Activated CD4-positive, alpha-beta T cell treated with anti-CD3 and anti-CD28 coated beads for 36 hours (primary cell): ENCODE measurements at regions of chr6 and their contacts with region 1.

Region 1: GRCh38 chr6:152863618-152864326 is 113.2 kb downstream of the VIP start:
- DNase-seq: peak; percentile 80
- ATAC-seq: peak; percentile 72
- H3K4me3 Mint-ChIP-seq: no peak overlapping the region
- H3K27ac Mint-ChIP-seq: no peak overlapping the region
- H3K4me1 Mint-ChIP-seq: no peaks in the 10 kb centered on the region
- H3K27me3 Mint-ChIP-seq: peaks cover 7% of the 10 kb centered on the region

Region 2: GRCh38 chr6:153312641-153313040 is 448.9 kb after region 1 on chr6:
- CTCF ChIA-PET with region 1: no interaction called
- POLR2A ChIA-PET with region 1: no interaction called
- intact Hi-C with region 1: loop called in 1 of 2 experiments (anchors 5 kb)
- DNase-seq: peak; percentile 65
- ATAC-seq: peak; percentile 51
- H3K4me3 Mint-ChIP-seq: no peak overlapping the region
- H3K27ac Mint-ChIP-seq: no peak overlapping the region
- H3K4me1 Mint-ChIP-seq: no peaks in the 10 kb centered on the region
- H3K27me3 Mint-ChIP-seq: peaks cover 2% of the 10 kb centered on the region